Breast epithelium (tissue), 4 donors: ENCODE measurements at regions of chr4 and their contacts with region 1.

Region 1: DNA sequence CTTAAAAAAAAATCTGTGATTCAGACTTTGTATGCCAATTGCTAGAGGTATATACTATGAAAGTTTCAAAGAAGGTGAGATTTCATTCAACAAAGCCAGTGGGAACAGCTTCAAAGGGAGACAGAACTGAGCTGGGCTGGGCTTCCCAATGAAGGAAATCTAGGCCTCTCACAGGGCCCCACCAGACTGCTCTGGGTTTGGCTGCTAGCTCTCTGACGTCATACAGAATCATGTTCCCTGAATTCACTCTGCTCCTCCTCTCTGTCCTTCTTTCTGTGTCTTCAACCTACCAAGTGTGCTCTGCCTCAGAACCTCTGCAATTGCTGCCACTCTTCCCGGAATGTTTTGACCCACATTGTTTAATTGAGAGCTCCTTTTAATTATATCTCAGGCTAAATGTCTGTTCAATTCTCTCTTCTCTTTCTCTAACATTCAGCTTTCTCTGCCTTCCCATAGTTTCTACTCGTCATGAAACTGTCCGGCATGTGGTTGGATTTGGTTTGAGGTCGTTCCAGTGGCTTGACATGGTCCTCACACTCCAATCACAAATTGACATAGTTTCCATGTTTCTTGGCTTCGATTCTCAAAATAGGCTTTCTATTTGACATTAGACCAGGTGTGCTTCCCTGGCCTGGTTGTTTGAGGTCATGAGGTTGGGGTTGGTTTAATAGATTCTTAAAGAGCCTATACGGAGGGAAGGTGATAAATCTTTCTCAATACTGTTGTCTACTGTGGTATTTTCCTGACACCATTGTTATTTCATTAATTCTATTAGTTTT is 282.1 kb upstream of the EMCN start:
- DNase-seq: no peak
- H3K4me3 ChIP-seq: no peak overlapping the region
- H3K27ac ChIP-seq: no peak overlapping the region
- H3K4me1 ChIP-seq: no peaks in the 10 kb centered on the region
- H3K27me3 ChIP-seq: no peaks in the 10 kb centered on the region
- CTCF ChIP-seq: no peak
- POLR2A ChIP-seq: no peak

Region 2: GRCh38 chr4:102055805-102056204 is 1255.9 kb after region 1 on chr4:
- intact Hi-C with region 1: loop called (anchors 5 kb)
- DNase-seq: no peak
- H3K4me3 ChIP-seq: no peak overlapping the region
- H3K27ac ChIP-seq: no peak overlapping the region
- H3K4me1 ChIP-seq: no peaks in the 10 kb centered on the region
- H3K27me3 ChIP-seq: no peaks in the 10 kb centered on the region
- CTCF ChIP-seq: no peak
- POLR2A ChIP-seq: no peak